Caco-2 (cell line): ENCODE measurements at regions of chr12 and their contacts with region 1.

Region 1: GRCh38 chr12:109736552-109737108 is 23.0 kb downstream of the FAM222A start:
- DNase-seq: peak; percentile 74 to 84
- H3K4me3 ChIP-seq: no peak overlapping the region
- H3K4me3 Mint-ChIP-seq: no peak overlapping the region
- H3K27ac Mint-ChIP-seq: peak overlapping the region; percentile 64
- H3K4me1 ChIP-seq: peaks cover 66% of the 10 kb centered on the region
- H3K4me1 Mint-ChIP-seq: peaks cover 41% of the 10 kb centered on the region
- H3K27me3 ChIP-seq: no peaks in the 10 kb centered on the region
- H3K27me3 Mint-ChIP-seq: no peaks in the 10 kb centered on the region
- CTCF ChIP-seq: no peak

Region 2: GRCh38 chr12:109677279-109677691 is 59.3 kb before region 1 on chr12:
- CTCF ChIA-PET with region 1: no interaction called
- POLR2A ChIA-PET with region 1: no interaction called
- intact Hi-C with region 1: no loop called
- DNase-seq: no peak
- H3K4me3 ChIP-seq: no peak overlapping the region
- H3K4me3 Mint-ChIP-seq: no peak overlapping the region
- H3K27ac Mint-ChIP-seq: no peak overlapping the region
- H3K4me1 ChIP-seq: 0 out of 2 replicates have a peak, but pooled peaks cover 9% of the 10 kb centered on the region
- H3K4me1 Mint-ChIP-seq: no peaks in the 10 kb centered on the region
- H3K27me3 ChIP-seq: no peaks in the 10 kb centered on the region
- H3K27me3 Mint-ChIP-seq: no peaks in the 10 kb centered on the region
- CTCF ChIP-seq: no peak

Region 3: GRCh38 chr12:109719236-109720022 is 17.2 kb before region 1 on chr12:
- CTCF ChIA-PET with region 1: interaction called, 11 read pairs
- POLR2A ChIA-PET with region 1: interaction called, 3 read pairs
- intact Hi-C with region 1: loop called (anchors 2 kb)
- DNase-seq: peak; percentile 50 to 53
- H3K4me3 ChIP-seq: no peak overlapping the region
- H3K4me3 Mint-ChIP-seq: no peak overlapping the region
- H3K27ac Mint-ChIP-seq: peak overlapping the region; percentile 60
- H3K4me1 ChIP-seq: peaks cover 26% of the 10 kb centered on the region
- H3K4me1 Mint-ChIP-seq: peaks cover 15% of the 10 kb centered on the region
- H3K27me3 ChIP-seq: no peaks in the 10 kb centered on the region
- H3K27me3 Mint-ChIP-seq: no peaks in the 10 kb centered on the region
- CTCF ChIP-seq: peak; percentile 29 to 61